B cell (primary cell): ENCODE measurements at regions of chr15 and their contacts with region 1.

Region 1: GRCh38 chr15:77070495-77071304 is at the start of gene TSPAN3:
- DNase-seq: peak; percentile 95
- ATAC-seq: peak; percentile 94
- H3K4me3 ChIP-seq: peak within 1 kb of the TSS; percentile 69 to 92 (median 79)
- H3K4me3 Mint-ChIP-seq: peak within 1 kb of the TSS; percentile 87
- H3K27ac ChIP-seq: peak within 1 kb of the TSS; percentile 71 to 84
- H3K27ac Mint-ChIP-seq: peak within 1 kb of the TSS; percentile 94
- H3K4me1 ChIP-seq: peaks cover 47 to 49% of the 10 kb centered on the region in 2 donors
- H3K4me1 Mint-ChIP-seq: peaks cover 52% of the 10 kb centered on the region
- H3K27me3 ChIP-seq: no peaks in the 10 kb centered on the region
- H3K27me3 Mint-ChIP-seq: no peaks in the 10 kb centered on the region
- CTCF ChIP-seq: no peak
- total RNA-seq, gene TSPAN3: 109 TPM in 2 replicates

Region 2: GRCh38 chr15:76905013-76905839 is 165.5 kb before region 1 on chr15 and contains the start of gene SCAPER:
- CTCF ChIA-PET with region 1: no interaction called
- POLR2A ChIA-PET with region 1: no interaction called
- intact Hi-C with region 1: loop called (anchors 1 kb)
- DNase-seq: peak; percentile 94
- ATAC-seq: peak; percentile 88
- H3K4me3 ChIP-seq: peak within 1 kb of the TSS; percentile 76 to 93 (median 80)
- H3K4me3 Mint-ChIP-seq: peak within 1 kb of the TSS; percentile 91
- H3K27ac ChIP-seq: peak within 1 kb of the TSS; percentile 82 to 92
- H3K27ac Mint-ChIP-seq: peak within 1 kb of the TSS; percentile 89
- H3K4me1 ChIP-seq: peaks cover 32 to 36% of the 10 kb centered on the region in 2 donors
- H3K4me1 Mint-ChIP-seq: peaks cover 52% of the 10 kb centered on the region
- H3K27me3 ChIP-seq: no peaks in the 10 kb centered on the region
- H3K27me3 Mint-ChIP-seq: no peaks in the 10 kb centered on the region
- CTCF ChIP-seq: no peak
- total RNA-seq, gene SCAPER: 59.5 and 61.6 TPM in 2 replicates

Region 3: DNA sequence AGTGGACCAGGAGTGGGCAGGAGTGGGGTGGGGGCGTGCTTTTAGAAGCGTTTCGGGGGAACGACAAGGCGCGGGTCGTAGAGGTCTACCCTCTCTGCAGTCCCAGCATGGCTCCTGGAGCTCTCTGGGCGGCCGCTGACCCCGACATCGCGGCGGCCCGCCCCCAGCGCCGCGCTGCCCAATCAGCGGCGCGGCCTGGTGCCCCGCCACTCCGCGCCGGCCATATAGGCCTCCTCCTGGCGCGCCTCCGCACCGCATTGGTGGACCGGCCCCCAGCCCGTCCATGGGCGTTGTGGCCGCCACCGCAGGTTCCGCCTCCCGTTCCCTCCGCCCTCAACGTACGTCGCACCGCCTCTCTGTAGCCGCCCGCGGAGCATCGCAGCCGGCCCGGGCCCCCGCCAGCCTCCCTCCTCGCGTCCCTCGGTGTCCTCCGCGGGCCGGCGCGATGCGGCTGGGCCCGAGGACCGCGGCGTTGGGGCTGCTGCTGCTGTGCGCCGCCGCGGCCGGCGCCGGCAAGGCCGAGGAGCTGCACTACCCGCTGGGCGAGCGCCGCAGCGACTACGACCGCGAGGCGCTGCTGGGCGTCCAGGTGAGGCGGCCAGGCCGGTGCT is 139.2 kb before region 1 on chr15 and contains the start of gene RCN2:
- CTCF ChIA-PET with region 1: no interaction called
- POLR2A ChIA-PET with region 1: no interaction called
- intact Hi-C with region 1: loop called (anchors 1 kb)
- DNase-seq: peak; percentile 95
- ATAC-seq: peak; percentile 97
- H3K4me3 ChIP-seq: peak within 1 kb of the TSS; percentile 54 to 84 (median 61)
- H3K4me3 Mint-ChIP-seq: peak within 1 kb of the TSS; percentile 90
- H3K27ac ChIP-seq: peak within 1 kb of the TSS; percentile 71 to 80
- H3K27ac Mint-ChIP-seq: peak within 1 kb of the TSS; percentile 96
- H3K4me1 ChIP-seq: peaks cover 26 to 40% of the 10 kb centered on the region in 2 donors
- H3K4me1 Mint-ChIP-seq: peaks cover 35% of the 10 kb centered on the region
- H3K27me3 ChIP-seq: no peaks in the 10 kb centered on the region
- H3K27me3 Mint-ChIP-seq: no peaks in the 10 kb centered on the region
- CTCF ChIP-seq: no peak
- total RNA-seq, gene RCN2: 27.8 and 29.5 TPM in 2 replicates

Region 4: GRCh38 chr15:76941636-76942035 is 129.1 kb before region 1 on chr15:
- CTCF ChIA-PET with region 1: no interaction called
- POLR2A ChIA-PET with region 1: no interaction called
- intact Hi-C with region 1: no loop called
- DNase-seq: no peak
- ATAC-seq: no peak
- H3K4me3 ChIP-seq: no peak overlapping the region
- H3K4me3 Mint-ChIP-seq: no peak overlapping the region
- H3K27ac ChIP-seq: no peak overlapping the region
- H3K27ac Mint-ChIP-seq: no peak overlapping the region
- H3K4me1 ChIP-seq: peaks cover 3 to 9% of the 10 kb centered on the region in 2 donors
- H3K4me1 Mint-ChIP-seq: peaks cover 14% of the 10 kb centered on the region
- H3K27me3 ChIP-seq: no peaks in the 10 kb centered on the region
- H3K27me3 Mint-ChIP-seq: no peaks in the 10 kb centered on the region
- CTCF ChIP-seq: no peak

Region 5: DNA sequence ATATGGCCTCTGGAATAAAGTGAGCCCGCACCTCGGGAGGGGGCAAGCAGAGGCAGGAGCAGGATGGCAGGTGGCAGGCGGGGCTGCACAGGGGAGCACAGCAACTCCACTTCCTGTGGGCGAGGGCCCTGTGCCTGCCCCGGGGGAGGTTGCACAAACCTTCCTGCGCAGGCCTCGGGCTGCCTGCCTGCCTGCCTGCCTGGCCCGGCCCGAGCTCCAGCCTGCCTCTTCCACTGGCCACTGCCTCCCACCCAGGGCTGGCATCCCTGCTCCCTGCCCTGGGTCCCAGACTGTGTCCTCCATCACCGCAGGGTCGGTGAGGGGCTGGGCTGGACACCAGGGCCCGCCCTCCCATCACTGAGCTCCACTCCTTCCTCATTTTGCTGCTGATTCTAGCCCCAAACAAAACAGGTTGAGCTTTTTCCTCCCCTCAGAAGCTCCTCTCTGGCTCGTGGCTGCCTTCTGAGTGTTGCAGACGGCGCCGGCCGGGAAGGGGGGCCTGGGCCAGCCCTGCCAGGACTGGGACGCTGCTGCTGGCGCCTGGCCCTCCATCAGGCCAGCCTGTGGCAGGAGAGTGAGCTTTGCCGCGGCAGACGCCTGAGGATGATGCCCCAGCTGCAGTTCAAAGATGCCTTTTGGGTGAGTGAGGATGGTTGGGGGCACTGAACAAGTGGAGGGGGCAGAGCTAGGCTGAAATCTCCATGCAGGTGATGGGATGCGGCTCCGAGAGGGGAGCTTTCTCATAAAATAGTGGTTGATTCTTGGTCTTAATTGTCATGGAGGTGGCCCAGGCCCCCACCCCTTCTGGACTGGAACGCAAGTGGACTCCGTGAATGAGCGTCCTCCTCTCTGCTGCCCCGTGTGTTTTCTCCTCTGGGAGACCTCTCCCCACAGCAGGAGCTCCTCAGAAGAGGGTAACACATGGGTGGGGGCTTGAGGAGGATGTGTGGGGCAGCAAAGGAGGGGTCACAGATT is 75.4 kb before region 1 on chr15 and contains the start of gene PSTPIP1:
- CTCF ChIA-PET with region 1: no interaction called
- POLR2A ChIA-PET with region 1: interaction called, 3 read pairs
- intact Hi-C with region 1: loop called (anchors 5 kb)
- DNase-seq: peak; percentile 80
- ATAC-seq: peak; percentile 89
- H3K4me3 ChIP-seq: peak within 1 kb of the TSS; percentile 74 to 86 (median 79)
- H3K4me3 Mint-ChIP-seq: peak within 1 kb of the TSS; percentile 99
- H3K27ac ChIP-seq: peak within 1 kb of the TSS; percentile 79 to 81
- H3K27ac Mint-ChIP-seq: peak within 1 kb of the TSS; percentile 100
- H3K4me1 ChIP-seq: peaks cover 38 to 57% of the 10 kb centered on the region in 2 donors
- H3K4me1 Mint-ChIP-seq: peaks cover 51% of the 10 kb centered on the region
- H3K27me3 ChIP-seq: no peaks in the 10 kb centered on the region
- H3K27me3 Mint-ChIP-seq: no peaks in the 10 kb centered on the region
- CTCF ChIP-seq: no peak
- total RNA-seq, gene PSTPIP1: 67.1 and 69.0 TPM in 2 replicates

Region 6: GRCh38 chr15:77053709-77054108 is 17.0 kb before region 1 on chr15:
- CTCF ChIA-PET with region 1: no interaction called
- POLR2A ChIA-PET with region 1: no interaction called
- intact Hi-C with region 1: no loop called
- DNase-seq: no peak
- ATAC-seq: no peak
- H3K4me3 ChIP-seq: no peak overlapping the region
- H3K4me3 Mint-ChIP-seq: no peak overlapping the region
- H3K27ac ChIP-seq: peak overlapping the region in 1 of 2 donors; percentile 16
- H3K27ac Mint-ChIP-seq: no peak overlapping the region
- H3K4me1 ChIP-seq: peaks cover 31 to 42% of the 10 kb centered on the region in 2 donors
- H3K4me1 Mint-ChIP-seq: peaks cover 43% of the 10 kb centered on the region
- H3K27me3 ChIP-seq: no peaks in the 10 kb centered on the region
- H3K27me3 Mint-ChIP-seq: no peaks in the 10 kb centered on the region
- CTCF ChIP-seq: no peak

Region 7: DNA sequence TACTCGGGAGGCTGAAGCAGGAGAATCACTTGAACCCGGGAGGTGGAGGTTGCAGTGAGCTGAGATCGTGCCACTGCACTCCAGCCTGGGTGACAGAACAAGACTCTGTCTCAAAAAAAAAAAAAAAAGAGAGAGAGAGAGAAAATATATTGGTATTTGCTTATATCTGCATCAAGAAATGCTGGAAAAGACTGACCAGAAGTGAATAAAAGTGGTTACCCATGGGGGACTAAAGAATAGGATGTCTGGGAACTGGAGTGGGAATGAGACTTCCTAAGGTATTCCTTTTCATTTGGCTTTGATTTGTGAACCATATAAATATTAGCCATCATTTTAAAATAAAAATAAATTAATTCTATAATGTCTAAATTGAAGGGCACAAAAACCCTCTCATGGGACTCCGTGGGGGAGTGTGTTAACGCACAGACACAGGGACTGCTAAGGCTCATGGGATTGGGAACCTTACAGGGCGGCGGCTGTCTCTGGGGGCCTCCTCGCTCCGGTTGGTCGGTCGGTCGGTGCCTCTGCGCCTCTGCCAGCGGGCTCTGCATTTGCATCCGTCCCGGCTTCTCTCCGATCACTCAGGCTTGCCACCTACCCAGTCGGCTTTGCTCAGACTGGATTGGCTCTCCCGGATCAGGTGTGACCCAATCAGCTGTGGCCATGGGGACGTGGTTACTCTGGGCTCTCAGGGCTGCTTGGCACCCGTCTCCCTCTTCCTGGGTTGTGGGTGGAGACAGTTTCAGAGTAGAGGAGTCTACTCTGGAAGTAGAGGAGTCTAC is 12.9 kb after region 1 on chr15:
- CTCF ChIA-PET with region 1: no interaction called
- POLR2A ChIA-PET with region 1: interaction called, 3 read pairs
- intact Hi-C with region 1: loop called (anchors 1 kb)
- DNase-seq: peak; percentile 96
- ATAC-seq: peak; percentile 96
- H3K4me3 ChIP-seq: peak overlapping the region in 4 of 5 experiments; percentile 12 to 45 (median 26)
- H3K4me3 Mint-ChIP-seq: peak overlapping the region; percentile 60
- H3K27ac ChIP-seq: peak overlapping the region; percentile 80 to 92
- H3K27ac Mint-ChIP-seq: peak overlapping the region; percentile 89
- H3K4me1 ChIP-seq: peaks cover 48 to 57% of the 10 kb centered on the region in 2 donors
- H3K4me1 Mint-ChIP-seq: peaks cover 51% of the 10 kb centered on the region
- H3K27me3 ChIP-seq: no peaks in the 10 kb centered on the region
- H3K27me3 Mint-ChIP-seq: no peaks in the 10 kb centered on the region
- CTCF ChIP-seq: no peak

Region 8: DNA sequence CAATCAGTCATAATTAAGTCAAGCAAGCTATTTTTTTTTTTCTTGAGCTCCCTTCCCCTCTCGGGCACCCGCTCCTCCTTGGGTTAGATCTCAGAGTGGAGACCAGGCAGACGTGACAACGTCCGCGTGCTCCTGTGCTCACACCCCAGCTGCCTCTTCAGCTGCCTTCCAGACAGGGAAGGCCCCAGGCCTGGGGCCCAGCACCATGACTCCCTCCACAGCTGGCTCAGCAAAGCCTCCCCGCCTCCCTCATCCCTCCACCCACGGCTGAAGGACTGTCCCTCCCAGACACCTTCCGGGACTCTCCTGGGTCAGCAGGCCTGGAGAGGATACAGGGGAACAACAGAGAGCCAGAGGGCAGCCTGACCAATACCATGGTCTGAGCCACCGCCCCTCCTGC is 650.0 kb after region 1 on chr15:
- CTCF ChIA-PET with region 1: no interaction called
- POLR2A ChIA-PET with region 1: no interaction called
- intact Hi-C with region 1: no loop called
- DNase-seq: no peak
- ATAC-seq: no peak
- H3K4me3 ChIP-seq: no peak overlapping the region
- H3K4me3 Mint-ChIP-seq: no peak overlapping the region
- H3K27ac ChIP-seq: no peak overlapping the region
- H3K27ac Mint-ChIP-seq: no peak overlapping the region
- H3K4me1 ChIP-seq: no peaks in the 10 kb centered on the region
- H3K4me1 Mint-ChIP-seq: no peaks in the 10 kb centered on the region
- H3K27me3 ChIP-seq: peaks cover 0 to 4% (median 0%) of the 10 kb centered on the region in 4 experiments
- H3K27me3 Mint-ChIP-seq: peaks cover 25% of the 10 kb centered on the region
- CTCF ChIP-seq: no peak